PC-3 (cell line): ENCODE measurements at regions of chr1 and their contacts with region 1.

Region 1: GRCh38 chr1:117166076-117166475 is 44.5 kb upstream of the TRIM45 start:
- DNase-seq: peak; percentile 93
- ATAC-seq: peak; percentile 85
- H3K4me3 ChIP-seq: no peak overlapping the region
- H3K27ac ChIP-seq: peak overlapping the region; percentile 61
- H3K4me1 ChIP-seq: peaks cover 58% of the 10 kb centered on the region
- H3K27me3 ChIP-seq: no peaks in the 10 kb centered on the region
- CTCF ChIP-seq: no peak

Region 2: GRCh38 chr1:116724765-116725375 is 441.2 kb before region 1 on chr1:
- CTCF ChIA-PET with region 1: no interaction called
- POLR2A ChIA-PET with region 1: interaction called, 11 read pairs
- intact Hi-C with region 1: no loop called
- DNase-seq: peak; percentile 76
- ATAC-seq: peak; percentile 29; the same call in 1 of the 2 replicates
- H3K4me3 ChIP-seq: no peak overlapping the region
- H3K27ac ChIP-seq: no peak overlapping the region
- H3K4me1 ChIP-seq: no peaks in the 10 kb centered on the region
- H3K27me3 ChIP-seq: no peaks in the 10 kb centered on the region
- CTCF ChIP-seq: peak; percentile 89

Region 3: GRCh38 chr1:117106478-117106877 is 59.6 kb before region 1 on chr1:
- CTCF ChIA-PET with region 1: no interaction called
- POLR2A ChIA-PET with region 1: no interaction called
- intact Hi-C with region 1: no loop called
- DNase-seq: no peak
- ATAC-seq: no peak
- H3K4me3 ChIP-seq: no peak overlapping the region
- H3K27ac ChIP-seq: no peak overlapping the region
- H3K4me1 ChIP-seq: peaks cover 21% of the 10 kb centered on the region
- H3K27me3 ChIP-seq: no peaks in the 10 kb centered on the region
- CTCF ChIP-seq: no peak

Region 4: GRCh38 chr1:117121776-117122697 is 44.0 kb before region 1 on chr1:
- CTCF ChIA-PET with region 1: no interaction called
- POLR2A ChIA-PET with region 1: no interaction called
- intact Hi-C with region 1: loop called (anchors 2 kb)
- DNase-seq: peak; percentile 97
- ATAC-seq: peak; percentile 97
- H3K4me3 ChIP-seq: peak overlapping the region; percentile 71
- H3K27ac ChIP-seq: peak overlapping the region; percentile 58
- H3K4me1 ChIP-seq: peaks cover 15% of the 10 kb centered on the region
- H3K27me3 ChIP-seq: no peaks in the 10 kb centered on the region
- CTCF ChIP-seq: peak; percentile 89

Region 5: GRCh38 chr1:117146570-117147346 is 19.3 kb before region 1 on chr1:
- CTCF ChIA-PET with region 1: no interaction called
- POLR2A ChIA-PET with region 1: interaction called, 4 read pairs
- intact Hi-C with region 1: loop called (anchors 1 kb)
- DNase-seq: peak; percentile 94
- ATAC-seq: peak; percentile 77
- H3K4me3 ChIP-seq: no peak overlapping the region; the same call in 1 of the 2 replicates
- H3K27ac ChIP-seq: peak overlapping the region; percentile 98
- H3K4me1 ChIP-seq: peaks cover 41% of the 10 kb centered on the region
- H3K27me3 ChIP-seq: no peaks in the 10 kb centered on the region
- CTCF ChIP-seq: no peak

Region 6: GRCh38 chr1:117225967-117226366 is 59.9 kb after region 1 on chr1:
- CTCF ChIA-PET with region 1: no interaction called
- POLR2A ChIA-PET with region 1: no interaction called
- intact Hi-C with region 1: loop called (anchors 5 kb)
- DNase-seq: peak; percentile 66
- ATAC-seq: peak; percentile 91
- H3K4me3 ChIP-seq: peak overlapping the region; percentile 31; the same call in 1 of the 2 replicates
- H3K27ac ChIP-seq: peak overlapping the region; percentile 87
- H3K4me1 ChIP-seq: peaks cover 19% of the 10 kb centered on the region
- H3K27me3 ChIP-seq: no peaks in the 10 kb centered on the region
- CTCF ChIP-seq: no peak